H1 (cell line): ENCODE measurements at regions of chr7 and their contacts with region 1.

Region 1: GRCh38 chr7:1555809-1556540 is at the start of gene TMEM184A:
- DNase-seq: peak in 1 of 2 experiments; percentile 79
- H3K4me3 ChIP-seq: no peak within 1 kb of the TSS
- H3K27ac ChIP-seq: no peak within 1 kb of the TSS
- H3K4me1 ChIP-seq: peaks cover 0 to 14% (median 10%) of the 10 kb centered on the region in 4 experiments; a peak in 6 of 7 replicates
- H3K27me3 ChIP-seq: no peaks in the 10 kb centered on the region
- CTCF ChIP-seq: peak in 2 of 3 experiments; percentile 74 to 95; a peak in 3 of 4 replicates
- EP300 ChIP-seq: no peak
- POLR2A ChIP-seq: no peak
- RAD21 ChIP-seq: peak; percentile 43 to 70
- total RNA-seq, gene TMEM184A: 1.5 and 1.8 TPM in 2 replicates

Region 2: DNA sequence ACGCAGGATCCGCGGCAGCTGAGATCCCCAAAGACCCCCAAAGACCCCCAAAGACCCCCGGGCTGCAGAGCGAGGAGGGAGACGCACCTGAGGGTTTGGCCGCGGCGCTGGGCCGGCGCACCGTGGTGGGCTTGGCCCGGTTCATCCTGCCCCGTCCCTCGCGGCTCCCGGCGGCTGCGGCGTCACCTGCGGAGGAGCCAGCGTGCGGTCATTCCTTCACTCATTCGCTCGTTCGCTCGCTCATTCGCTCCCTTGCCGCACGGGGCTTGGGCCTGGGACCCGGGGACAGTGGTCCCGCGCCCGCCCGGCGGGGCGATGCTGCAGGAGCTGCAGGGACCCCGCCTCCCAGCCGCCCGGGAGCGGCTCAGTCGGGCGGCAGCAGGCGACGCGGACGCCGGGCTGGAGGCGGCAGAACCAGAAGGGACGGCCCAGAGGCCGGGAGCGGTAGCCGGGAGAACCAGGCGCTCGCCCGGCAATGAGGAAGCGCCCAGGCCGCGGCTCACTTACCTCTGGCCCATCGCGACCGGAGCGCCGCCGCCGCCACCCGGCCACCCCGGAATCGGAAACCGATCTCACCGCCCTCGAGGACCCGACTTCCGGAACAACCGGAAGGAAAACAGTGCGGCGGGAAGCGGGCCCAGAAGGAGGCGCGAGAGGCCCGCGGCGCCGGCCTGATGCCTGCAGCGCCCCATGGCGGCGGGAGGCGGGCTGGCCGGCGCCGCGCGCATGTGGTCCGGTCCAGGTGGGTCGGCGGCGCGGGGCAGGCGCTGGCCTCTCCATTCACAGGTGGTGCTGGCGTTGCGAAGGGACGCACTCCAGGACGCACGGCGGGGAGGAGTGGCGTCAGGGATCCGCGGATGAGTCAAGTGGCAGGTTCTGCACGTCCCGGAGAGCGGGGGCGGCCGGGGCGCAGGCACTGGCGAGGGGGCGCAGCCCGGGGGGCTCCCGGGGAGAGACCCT is 51.9 kb before region 1 on chr7 and contains the start of gene INTS1:
- CTCF ChIA-PET with region 1: interaction called, 14 read pairs
- POLR2A ChIA-PET with region 1: interaction called, 5 read pairs
- DNase-seq: peak; percentile 44 to 90
- H3K4me3 ChIP-seq: peak within 1 kb of the TSS; percentile 55 to 98 (median 86)
- H3K27ac ChIP-seq: peak within 1 kb of the TSS; percentile 66; the same call in 1 of the 2 replicates
- H3K4me1 ChIP-seq: peaks cover 3 to 15% (median 9%) of the 10 kb centered on the region in 4 experiments; a peak in 6 of 7 replicates
- H3K27me3 ChIP-seq: no peaks in the 10 kb centered on the region
- CTCF ChIP-seq: peak in 2 of 3 experiments; percentile 83 to 99; a peak in 3 of 4 replicates
- EP300 ChIP-seq: peak in 1 of 2 experiments; percentile 82; a peak in 1 of 3 replicates
- POLR2A ChIP-seq: peak in 1 of 2 experiments; percentile 83; a peak in 2 of 3 replicates
- RAD21 ChIP-seq: peak in 1 of 2 experiments; percentile 67; a peak in 3 of 4 replicates
- total RNA-seq, gene INTS1: 104 and 116 TPM in 2 replicates

Region 3: GRCh38 chr7:1537535-1538412 is 18.2 kb before region 1 on chr7:
- CTCF ChIA-PET with region 1: interaction called, 18 read pairs
- POLR2A ChIA-PET with region 1: interaction called, 8 read pairs
- DNase-seq: peak in 1 of 2 experiments; percentile 61
- H3K4me3 ChIP-seq: no peak overlapping the region; a peak in 1 of 8 replicates
- H3K27ac ChIP-seq: peak overlapping the region; percentile 47
- H3K4me1 ChIP-seq: peaks cover 9 to 33% (median 25%) of the 10 kb centered on the region in 4 experiments; a peak in 6 of 7 replicates
- H3K27me3 ChIP-seq: no peaks in the 10 kb centered on the region
- CTCF ChIP-seq: no peak
- EP300 ChIP-seq: no peak
- POLR2A ChIP-seq: no peak
- RAD21 ChIP-seq: no peak